ENCODE measurements at regions of chr13 and their contacts with region 1.

Region 1: DNA sequence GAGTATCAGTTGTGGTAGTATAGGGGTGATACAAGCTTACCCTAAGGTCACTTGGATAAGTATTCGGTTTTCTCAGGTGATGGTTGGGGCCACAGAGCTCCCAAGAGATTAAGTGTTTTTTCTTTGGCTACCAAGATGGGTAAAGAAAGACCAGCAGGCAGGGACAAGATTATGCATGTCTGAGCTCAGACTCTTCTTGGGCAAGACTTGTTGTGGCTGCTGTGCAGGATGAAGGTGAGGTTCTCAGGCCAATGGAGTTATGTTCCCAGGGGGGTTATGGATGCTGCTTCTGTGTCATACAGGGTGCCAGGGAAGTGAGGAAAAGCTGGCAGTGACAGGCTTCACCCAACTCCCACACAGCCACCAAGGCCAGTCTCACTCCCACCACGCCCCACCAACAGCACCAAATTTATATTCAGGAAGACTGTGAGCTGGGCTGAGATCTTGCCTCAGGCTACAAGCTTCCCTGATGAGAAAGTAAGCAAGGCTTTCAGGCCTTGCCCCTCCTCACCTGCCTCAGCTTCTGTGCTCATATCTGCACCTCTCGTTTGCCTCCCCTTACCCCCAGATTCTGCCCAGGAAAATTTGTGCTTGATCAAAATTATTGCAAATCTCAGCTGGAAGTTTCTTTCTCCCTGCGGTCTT is 511.8 kb upstream of the SLITRK1 start:
- DNase-seq: no peak

Region 2: DNA sequence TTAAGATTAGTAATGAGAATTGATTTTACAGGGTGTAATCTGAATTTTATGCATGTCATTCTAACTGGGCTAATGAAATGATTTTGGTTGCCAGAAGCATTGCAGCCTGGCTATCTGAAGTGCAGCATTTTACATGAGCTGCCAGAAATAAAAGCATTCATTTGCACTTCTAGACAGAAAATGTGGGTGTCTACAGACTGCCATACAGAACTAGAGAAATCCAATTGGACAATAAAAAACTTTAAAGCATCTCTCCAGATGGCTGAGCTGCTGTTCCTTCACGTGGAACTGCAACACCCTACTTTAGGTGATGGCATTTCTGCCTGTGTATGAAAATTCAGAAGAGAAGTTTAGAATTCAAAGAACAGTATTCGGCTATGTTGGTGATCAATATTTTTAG is 61.8 kb before region 1 on chr13:
- intact Hi-C with region 1: no loop called
- DNase-seq: peak in 4 of 10 donors; percentile 7 to 37 (median 11)

Region 3: GRCh38 chr13:84377106-84377505 is 17.0 kb before region 1 on chr13:
- intact Hi-C with region 1: loop called (anchors 1 kb)
- DNase-seq: no peak